Dorsolateral prefrontal cortex (tissue), 120 donors: ENCODE measurements at regions of chr2 and their contacts with region 1.

Region 1: DNA sequence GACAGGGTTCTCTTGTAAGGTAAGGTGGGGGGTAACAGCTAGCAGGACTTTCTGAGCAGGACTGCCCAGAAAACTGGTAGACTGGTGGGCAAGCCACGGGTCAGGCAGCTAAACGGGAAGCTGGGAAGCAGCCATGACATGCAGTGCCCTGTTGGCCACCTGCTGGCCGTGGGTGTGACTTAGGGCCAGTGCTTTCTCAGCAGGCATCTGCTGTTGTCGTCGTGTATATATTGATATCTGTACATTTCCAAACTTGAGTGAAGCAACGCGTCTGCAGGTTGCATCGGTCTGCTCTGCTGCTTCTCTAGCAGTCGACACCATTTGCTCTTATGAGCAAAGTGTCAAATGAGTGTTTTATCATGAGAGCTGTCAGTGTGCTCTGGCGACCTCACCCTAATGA is 31.0 kb downstream of the COA5 start:
- DNase-seq: no peak
- H3K4me3 ChIP-seq: no peak overlapping the region
- H3K27ac ChIP-seq: no peak overlapping the region
- H3K27me3 ChIP-seq: no peaks in the 10 kb centered on the region
- CTCF ChIP-seq: peak in 1 of 56 donors; percentile 9

Region 2: DNA sequence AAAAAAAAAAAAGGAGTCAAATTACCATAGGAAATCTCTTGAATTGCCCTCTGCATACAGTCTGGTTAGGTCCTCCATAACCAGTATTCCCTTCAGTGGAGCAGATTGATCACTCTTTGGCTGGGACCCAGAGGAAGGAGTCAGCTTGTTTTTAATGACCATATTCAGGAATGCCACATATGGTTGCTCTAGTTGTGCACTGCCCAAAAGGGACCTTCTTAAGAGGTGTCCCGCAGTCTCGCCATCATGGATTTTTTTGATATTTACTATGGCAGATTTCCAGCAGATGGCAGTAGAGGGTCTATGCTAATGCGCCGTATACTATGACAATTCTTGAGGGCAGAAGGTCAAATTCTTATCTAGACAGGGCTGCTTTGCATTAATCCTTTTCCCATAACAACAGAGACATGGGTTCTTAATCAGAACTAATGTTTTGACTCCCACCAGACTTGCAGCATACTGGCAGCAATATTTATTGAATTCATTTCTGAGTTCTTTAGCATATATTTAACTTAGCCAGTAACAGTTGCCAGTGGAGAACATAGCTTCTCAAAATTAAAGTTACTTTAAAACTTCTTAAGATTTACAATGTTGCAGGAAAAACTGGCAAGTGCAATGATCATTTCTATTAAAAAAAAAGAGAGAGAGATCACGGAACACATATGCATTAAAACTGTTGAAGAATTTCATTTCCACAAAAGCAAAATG is 164.4 kb before region 1 on chr2:
- intact Hi-C with region 1: loop called in 1 of 2 experiments (anchors 10 kb)
- DNase-seq: peak in 1 of 10 donors; percentile 33
- H3K4me3 ChIP-seq: no peak overlapping the region
- H3K27ac ChIP-seq: no peak overlapping the region
- H3K27me3 ChIP-seq: no peaks in the 10 kb centered on the region
- CTCF ChIP-seq: peak; percentile 64 to 85 (median 76)

Region 3: DNA sequence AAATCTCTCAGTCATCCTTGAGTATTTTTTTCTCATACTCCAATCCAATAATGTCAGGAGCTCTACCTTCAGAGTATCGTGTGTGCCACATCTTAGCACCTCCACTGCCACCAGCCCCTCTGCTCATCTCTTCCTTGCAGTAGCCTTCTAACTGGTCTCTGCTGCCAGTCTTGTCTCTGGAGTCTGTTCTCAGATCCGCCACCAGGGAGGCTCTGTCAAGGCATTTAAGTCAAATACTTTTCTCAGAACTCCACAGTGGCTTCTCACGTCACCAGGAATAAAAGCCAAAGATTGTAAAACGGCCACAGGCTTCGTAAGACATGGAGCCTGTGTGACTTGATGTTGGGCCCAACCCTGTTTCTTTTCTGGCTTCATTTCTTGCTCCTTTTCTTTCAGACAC is 38.2 kb after region 1 on chr2:
- intact Hi-C with region 1: no loop called
- DNase-seq: no peak
- H3K4me3 ChIP-seq: no peak overlapping the region
- H3K27ac ChIP-seq: no peak overlapping the region
- H3K27me3 ChIP-seq: no peaks in the 10 kb centered on the region
- CTCF ChIP-seq: peak in 3 of 56 donors; percentile 6 to 15 (median 9)

Region 4: DNA sequence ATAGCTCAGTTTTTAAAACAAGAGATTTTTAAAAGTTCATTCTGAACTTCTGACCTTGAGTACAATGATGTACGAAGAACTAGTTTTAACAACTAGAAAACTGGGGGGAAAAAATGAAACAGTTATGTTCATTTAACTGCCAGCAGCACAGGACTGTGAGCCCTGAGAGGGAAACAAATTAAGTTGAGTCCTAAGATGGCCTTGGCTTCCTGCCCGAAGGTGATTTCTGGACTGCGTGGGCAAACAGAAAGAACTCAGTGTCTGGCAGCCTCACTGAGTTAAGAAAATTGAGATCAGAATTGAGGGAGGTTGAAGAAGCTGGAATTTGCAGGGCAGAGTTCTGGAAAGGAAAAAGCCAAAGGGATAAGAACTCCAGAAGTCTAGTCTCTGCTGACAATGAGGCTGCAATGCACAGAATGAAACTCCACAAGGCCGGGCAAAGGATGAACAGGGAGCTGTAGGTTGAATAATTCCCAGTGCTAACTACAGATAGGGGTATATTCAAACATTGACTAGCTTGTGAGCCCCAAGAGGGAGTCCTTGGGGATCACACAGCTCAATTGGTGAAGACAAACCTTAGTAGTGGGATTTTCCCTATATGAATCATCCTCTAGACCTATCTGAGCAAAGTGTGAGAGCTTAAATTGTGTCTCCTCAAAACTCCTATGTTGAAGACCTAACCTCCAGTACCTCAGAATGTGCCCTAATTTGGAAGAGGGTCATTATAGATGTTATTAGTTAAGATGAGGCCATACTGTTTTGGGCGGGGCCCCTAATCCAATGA is 371.8 kb after region 1 on chr2:
- intact Hi-C with region 1: no loop called
- DNase-seq: no peak
- H3K4me3 ChIP-seq: no peak overlapping the region
- H3K27ac ChIP-seq: peak overlapping the region in 25 of 59 donors; percentile 1 to 87 (median 34)
- H3K27me3 ChIP-seq: no peaks in the 10 kb centered on the region
- CTCF ChIP-seq: no peak

Region 5: DNA sequence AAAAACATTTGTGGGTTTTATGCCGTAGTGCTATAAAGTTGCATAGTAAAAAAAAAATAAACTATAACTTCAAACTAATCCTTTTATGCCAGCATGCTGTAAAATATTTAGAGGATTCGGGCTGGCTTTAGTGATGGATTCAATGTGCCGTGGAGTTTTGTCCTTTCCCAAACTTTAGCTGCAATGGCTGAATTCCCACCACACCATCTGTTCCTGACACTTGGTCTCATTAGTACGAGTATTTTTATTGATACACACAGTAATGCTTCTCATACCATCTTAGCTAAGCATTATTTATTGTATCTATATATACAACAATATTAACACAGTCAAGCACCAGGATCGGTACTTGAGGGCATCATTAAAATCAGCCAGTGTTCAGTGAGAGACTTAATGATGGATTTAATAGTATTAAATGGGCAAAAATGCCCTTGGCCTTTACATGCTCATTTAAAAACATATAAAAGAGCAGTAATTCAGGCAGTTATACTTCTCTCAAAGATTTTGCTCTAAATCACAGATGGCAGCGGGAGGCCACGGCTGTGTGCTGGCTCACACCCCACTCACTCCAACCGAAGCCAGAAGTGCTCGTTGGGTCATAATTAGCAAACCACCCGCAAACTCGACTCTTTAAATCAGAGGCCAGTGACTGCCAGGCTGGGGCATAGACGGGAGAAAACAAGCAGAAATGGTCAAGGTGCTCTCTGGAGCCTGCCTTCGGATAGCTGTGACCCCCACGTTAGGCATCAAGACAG is 1209.5 kb after region 1 on chr2:
- intact Hi-C with region 1: no loop called
- DNase-seq: peak in 1 of 10 donors; percentile 50
- H3K4me3 ChIP-seq: no peak overlapping the region
- H3K27ac ChIP-seq: no peak overlapping the region
- H3K27me3 ChIP-seq: no peaks in the 10 kb centered on the region
- CTCF ChIP-seq: no peak